Naive thymus-derived CD4-positive, alpha-beta T cell (primary cell): ENCODE measurements at regions of chr4 and their contacts with region 1.

Region 1: GRCh38 chr4:128809477-128810330 is at the start of gene JADE1:
- DNase-seq: peak; percentile 79 to 91 (median 89)
- ATAC-seq: peak; percentile 82
- H3K4me3 ChIP-seq: peak within 1 kb of the TSS; percentile 99
- H3K4me3 Mint-ChIP-seq: peak within 1 kb of the TSS; percentile 93 to 100 (median 97)
- H3K27ac ChIP-seq: peak within 1 kb of the TSS; percentile 93
- H3K27ac Mint-ChIP-seq: peak within 1 kb of the TSS; percentile 93 to 100 (median 96)
- H3K4me1 ChIP-seq: peaks cover 5 to 17% of the 10 kb centered on the region in 2 donors
- H3K4me1 Mint-ChIP-seq: peaks cover 12 to 28% (median 17%) of the 10 kb centered on the region in 7 donors
- H3K27me3 ChIP-seq: no peaks in the 10 kb centered on the region
- H3K27me3 Mint-ChIP-seq: no peaks in the 10 kb centered on the region
- total RNA-seq, gene JADE1: 35.4 to 79.5 (median 62.2) TPM

Region 2: DNA sequence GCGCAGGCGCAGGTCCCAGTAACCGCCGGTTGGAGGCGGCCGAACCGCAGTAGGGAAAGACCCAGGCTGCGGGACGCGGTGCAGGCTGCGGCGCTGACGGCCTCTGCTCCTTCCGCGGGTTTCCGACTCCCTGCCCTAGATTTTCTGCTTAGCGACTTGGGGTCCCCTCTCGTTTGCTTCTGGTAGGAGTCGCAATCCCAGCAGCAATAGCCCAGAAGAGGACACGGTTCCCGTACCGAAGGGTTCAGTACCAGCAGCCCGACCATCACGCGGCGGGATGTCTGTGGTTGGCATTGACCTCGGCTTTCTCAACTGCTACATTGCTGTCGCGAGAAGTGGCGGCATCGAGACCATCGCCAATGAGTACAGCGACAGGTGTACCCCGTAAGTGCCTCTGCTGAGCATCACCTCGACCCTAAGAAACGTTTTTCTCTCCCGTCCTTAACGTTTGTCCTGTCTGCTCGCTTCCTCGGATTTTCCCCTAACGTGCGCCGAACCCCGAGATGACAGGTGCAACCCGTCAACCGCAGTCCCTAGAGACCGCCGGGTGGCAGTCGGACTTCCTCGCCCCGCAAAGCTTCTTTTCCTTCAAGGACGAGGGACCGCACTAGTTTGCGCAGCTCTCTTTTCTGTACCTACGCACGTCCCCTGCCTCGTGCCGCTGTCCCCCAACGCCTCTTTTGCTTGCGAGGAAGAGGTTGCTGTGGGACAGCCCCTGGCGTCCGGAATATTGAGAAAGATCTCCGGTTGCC is 1027.3 kb before region 1 on chr4 and contains the start of gene HSPA4L:
- CTCF ChIA-PET with region 1: no interaction called
- POLR2A ChIA-PET with region 1: no interaction called
- intact Hi-C with region 1: loop called in 1 of 2 experiments (anchors 5 kb)
- DNase-seq: peak in 8 of 9 donors; percentile 7 to 77 (median 22)
- ATAC-seq: peak; percentile 81
- H3K4me3 ChIP-seq: peak within 1 kb of the TSS; percentile 66
- H3K4me3 Mint-ChIP-seq: peak within 1 kb of the TSS; percentile 86 to 96 (median 91)
- H3K27ac ChIP-seq: no peak within 1 kb of the TSS
- H3K27ac Mint-ChIP-seq: peak within 1 kb of the TSS in 5 of 9 donors; percentile 7 to 86 (median 49)
- H3K4me1 ChIP-seq: peaks cover 0 to 6% of the 10 kb centered on the region in 2 donors
- H3K4me1 Mint-ChIP-seq: peaks cover 13 to 20% (median 18%) of the 10 kb centered on the region in 7 donors
- H3K27me3 ChIP-seq: peaks cover 20 to 21% of the 10 kb centered on the region in 2 donors
- H3K27me3 Mint-ChIP-seq: peaks cover 64 to 78% (median 67%) of the 10 kb centered on the region in 5 donors
- total RNA-seq, gene HSPA4L: 1.1 TPM in 1 of 5 experiments, not detected in the others

Region 3: GRCh38 chr4:128060699-128061565 is 748.8 kb before region 1 on chr4 and contains the start of gene LARP1B:
- CTCF ChIA-PET with region 1: no interaction called
- POLR2A ChIA-PET with region 1: interaction called, 3 read pairs
- intact Hi-C with region 1: loop called (anchors 1 kb)
- DNase-seq: peak; percentile 83 to 96 (median 89)
- ATAC-seq: peak; percentile 93
- H3K4me3 ChIP-seq: peak within 1 kb of the TSS; percentile 74
- H3K4me3 Mint-ChIP-seq: peak within 1 kb of the TSS; percentile 82 to 91 (median 88)
- H3K27ac ChIP-seq: peak within 1 kb of the TSS; percentile 90
- H3K27ac Mint-ChIP-seq: peak within 1 kb of the TSS; percentile 87 to 94 (median 91)
- H3K4me1 ChIP-seq: peaks cover 0 to 5% of the 10 kb centered on the region in 2 donors
- H3K4me1 Mint-ChIP-seq: peaks cover 0 to 16% (median 10%) of the 10 kb centered on the region in 7 donors
- H3K27me3 ChIP-seq: no peaks in the 10 kb centered on the region
- H3K27me3 Mint-ChIP-seq: peaks cover 0 to 2% (median 0%) of the 10 kb centered on the region in 5 donors
- total RNA-seq, gene LARP1B: 9.5 to 18.2 (median 13.7) TPM

Region 4: DNA sequence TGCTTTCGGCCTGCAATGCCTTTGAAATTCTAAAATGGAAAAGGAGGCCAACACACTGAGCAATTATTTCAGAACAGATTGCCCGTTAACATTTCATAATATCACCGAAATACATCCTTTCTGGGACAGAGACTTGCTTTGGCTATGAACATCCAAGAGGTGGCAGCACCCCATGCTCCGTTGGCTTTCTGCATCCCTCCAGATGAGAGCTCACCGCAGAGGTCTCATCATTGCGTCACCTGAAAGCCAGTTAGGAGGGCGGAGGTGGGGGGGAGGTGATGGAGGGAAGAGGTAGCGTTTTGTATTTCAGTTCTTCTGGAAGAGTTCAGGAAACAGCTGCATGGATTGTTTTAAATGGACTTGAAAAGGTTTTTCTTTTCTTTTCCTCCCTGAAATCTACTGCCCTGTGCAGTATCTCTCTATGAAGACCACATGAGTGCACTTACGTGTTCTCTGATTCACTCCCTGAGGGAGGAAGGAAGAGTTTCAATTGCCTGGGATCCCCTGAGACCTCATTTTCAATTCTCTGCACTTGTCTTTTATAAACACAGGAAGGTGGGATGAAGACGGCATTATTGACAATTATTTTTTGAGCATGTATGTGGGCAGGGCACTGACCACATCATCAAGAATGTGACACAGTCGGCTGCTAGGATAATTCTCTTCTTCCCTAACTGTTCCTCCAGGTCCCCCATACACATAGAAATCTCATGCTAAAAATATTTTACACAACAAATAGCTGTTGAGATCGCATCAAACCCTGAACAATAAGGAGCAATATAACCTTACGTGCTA is 355.2 kb before region 1 on chr4:
- CTCF ChIA-PET with region 1: no interaction called
- POLR2A ChIA-PET with region 1: no interaction called
- intact Hi-C with region 1: loop called (anchors 1 kb)
- DNase-seq: peak; percentile 16 to 68 (median 49)
- ATAC-seq: peak; percentile 92
- H3K4me3 ChIP-seq: no peak overlapping the region
- H3K4me3 Mint-ChIP-seq: no peak overlapping the region
- H3K27ac ChIP-seq: no peak overlapping the region
- H3K27ac Mint-ChIP-seq: peak overlapping the region in 1 of 9 donors; percentile 47
- H3K4me1 ChIP-seq: no peaks in the 10 kb centered on the region
- H3K4me1 Mint-ChIP-seq: peaks cover 0 to 11% (median 0%) of the 10 kb centered on the region in 7 donors
- H3K27me3 ChIP-seq: no peaks in the 10 kb centered on the region
- H3K27me3 Mint-ChIP-seq: no peaks in the 10 kb centered on the region

Region 5: DNA sequence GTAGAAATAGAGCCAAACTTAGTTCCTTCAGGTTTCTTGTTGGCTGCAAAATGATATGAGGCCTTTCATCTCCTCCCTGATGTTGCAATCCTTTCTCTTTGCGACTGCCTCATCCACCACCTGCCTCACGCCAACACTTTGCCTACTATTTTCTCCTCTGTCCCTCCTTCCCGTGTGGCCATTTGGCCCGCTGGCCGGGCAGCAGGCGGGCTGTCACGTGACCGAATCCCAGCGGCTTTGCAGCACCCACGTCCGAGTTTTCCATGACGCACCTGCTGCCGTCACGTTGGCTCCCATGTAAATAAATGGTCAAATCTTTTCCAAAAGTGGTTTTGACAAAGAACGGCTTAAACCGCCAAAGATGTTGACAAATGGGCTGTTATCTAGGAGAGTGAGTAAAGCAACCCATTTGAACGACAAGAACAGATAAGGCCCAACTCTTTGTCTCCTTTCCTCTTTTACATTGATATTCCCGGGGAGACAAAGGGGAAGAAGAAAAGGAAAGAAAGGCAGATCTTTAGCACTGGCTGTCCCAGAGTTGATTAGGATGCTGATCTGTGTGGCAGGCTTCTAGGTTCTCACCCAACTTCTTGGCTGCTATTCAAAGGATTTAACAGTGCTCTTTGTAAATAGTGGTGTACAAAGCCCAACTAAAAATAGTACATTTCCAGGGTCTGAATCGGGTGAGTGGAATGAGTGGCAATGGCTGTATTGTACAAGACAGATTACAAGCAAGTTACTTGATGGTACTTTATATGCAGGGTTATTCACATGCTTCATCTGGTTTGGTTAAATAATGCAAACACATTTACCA is 174.4 kb before region 1 on chr4:
- CTCF ChIA-PET with region 1: no interaction called
- POLR2A ChIA-PET with region 1: no interaction called
- intact Hi-C with region 1: no loop called
- DNase-seq: no peak
- ATAC-seq: no peak
- H3K4me3 ChIP-seq: no peak overlapping the region
- H3K4me3 Mint-ChIP-seq: no peak overlapping the region
- H3K27ac ChIP-seq: no peak overlapping the region
- H3K27ac Mint-ChIP-seq: no peak overlapping the region
- H3K4me1 ChIP-seq: no peaks in the 10 kb centered on the region
- H3K4me1 Mint-ChIP-seq: peaks cover 0 to 4% (median 0%) of the 10 kb centered on the region in 7 donors
- H3K27me3 ChIP-seq: no peaks in the 10 kb centered on the region
- H3K27me3 Mint-ChIP-seq: peaks cover 0 to 8% (median 4%) of the 10 kb centered on the region in 5 donors

Region 6: DNA sequence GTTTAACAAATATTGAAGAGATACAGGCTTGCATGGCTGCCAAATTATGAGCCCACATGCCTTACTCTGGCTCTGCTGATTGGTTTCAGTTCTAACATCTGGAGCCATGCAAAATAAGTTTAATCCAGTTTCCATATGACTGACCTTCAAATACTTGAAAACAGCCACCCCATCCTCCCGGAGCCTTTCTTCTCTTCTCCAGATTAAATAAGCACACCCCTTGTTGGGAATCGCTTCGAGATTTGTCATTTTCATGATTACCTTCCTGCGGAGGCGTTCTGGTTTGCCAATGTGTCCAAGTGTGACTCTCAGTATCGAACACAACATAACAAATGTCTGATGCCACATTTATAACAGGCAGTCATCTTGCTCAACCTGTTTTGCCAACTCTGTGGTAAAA is 101.8 kb before region 1 on chr4:
- CTCF ChIA-PET with region 1: no interaction called
- POLR2A ChIA-PET with region 1: no interaction called
- intact Hi-C with region 1: loop called in 1 of 2 experiments (anchors 5 kb)
- DNase-seq: no peak
- ATAC-seq: no peak
- H3K4me3 ChIP-seq: no peak overlapping the region
- H3K4me3 Mint-ChIP-seq: no peak overlapping the region
- H3K27ac ChIP-seq: no peak overlapping the region
- H3K27ac Mint-ChIP-seq: peak overlapping the region in 4 of 9 donors; percentile 77 to 91 (median 88)
- H3K4me1 ChIP-seq: peaks cover 0 to 12% of the 10 kb centered on the region in 2 donors
- H3K4me1 Mint-ChIP-seq: peaks cover 5 to 31% (median 28%) of the 10 kb centered on the region in 7 donors
- H3K27me3 ChIP-seq: no peaks in the 10 kb centered on the region
- H3K27me3 Mint-ChIP-seq: no peaks in the 10 kb centered on the region

Region 7: DNA sequence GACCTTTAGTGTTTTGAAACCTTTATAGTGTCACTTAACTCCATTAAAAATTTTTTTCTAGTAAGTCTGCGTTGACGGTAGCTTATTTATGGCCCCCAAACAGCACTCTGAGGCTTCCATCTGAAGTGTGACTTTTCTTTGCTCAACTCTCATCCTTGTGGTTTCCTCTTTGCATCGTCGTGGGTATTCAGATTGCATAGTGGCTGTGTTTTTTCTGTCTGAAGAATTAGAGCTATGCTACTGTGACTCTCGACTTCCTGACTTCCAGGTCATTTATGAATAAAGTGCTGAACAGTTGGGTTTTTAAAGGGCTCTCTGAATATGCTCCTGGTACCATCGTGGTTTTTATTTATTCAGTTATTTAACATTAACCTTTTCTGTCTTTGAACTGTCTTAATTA is 44.7 kb after region 1 on chr4:
- CTCF ChIA-PET with region 1: no interaction called
- POLR2A ChIA-PET with region 1: no interaction called
- intact Hi-C with region 1: loop called in 1 of 2 experiments (anchors 2 kb)
- DNase-seq: peak in 6 of 9 donors; percentile 21 to 58 (median 31)
- ATAC-seq: peak; percentile 86
- H3K4me3 ChIP-seq: no peak overlapping the region
- H3K4me3 Mint-ChIP-seq: peak overlapping the region in 9 of 10 donors; percentile 23 to 71 (median 52)
- H3K27ac ChIP-seq: peak overlapping the region; percentile 27
- H3K27ac Mint-ChIP-seq: peak overlapping the region; percentile 61 to 94 (median 81)
- H3K4me1 ChIP-seq: peaks cover 16 to 18% of the 10 kb centered on the region in 2 donors
- H3K4me1 Mint-ChIP-seq: peaks cover 17 to 46% (median 38%) of the 10 kb centered on the region in 7 donors
- H3K27me3 ChIP-seq: no peaks in the 10 kb centered on the region
- H3K27me3 Mint-ChIP-seq: no peaks in the 10 kb centered on the region